B cell (primary cell): ENCODE measurements at regions of chr12 and their contacts with region 1.

Region 1: GRCh38 chr12:104108755-104109445 is 29.1 kb downstream of the NFYB start:
- DNase-seq: peak; percentile 82
- ATAC-seq: peak; percentile 91
- H3K4me3 ChIP-seq: no peak overlapping the region
- H3K4me3 Mint-ChIP-seq: no peak overlapping the region
- H3K27ac ChIP-seq: no peak overlapping the region
- H3K27ac Mint-ChIP-seq: peak overlapping the region; percentile 44
- H3K4me1 ChIP-seq: peaks cover 6 to 8% of the 10 kb centered on the region in 2 donors
- H3K4me1 Mint-ChIP-seq: peaks cover 8% of the 10 kb centered on the region
- H3K27me3 ChIP-seq: no peaks in the 10 kb centered on the region
- H3K27me3 Mint-ChIP-seq: no peaks in the 10 kb centered on the region
- CTCF ChIP-seq: peak; percentile 95

Region 2: DNA sequence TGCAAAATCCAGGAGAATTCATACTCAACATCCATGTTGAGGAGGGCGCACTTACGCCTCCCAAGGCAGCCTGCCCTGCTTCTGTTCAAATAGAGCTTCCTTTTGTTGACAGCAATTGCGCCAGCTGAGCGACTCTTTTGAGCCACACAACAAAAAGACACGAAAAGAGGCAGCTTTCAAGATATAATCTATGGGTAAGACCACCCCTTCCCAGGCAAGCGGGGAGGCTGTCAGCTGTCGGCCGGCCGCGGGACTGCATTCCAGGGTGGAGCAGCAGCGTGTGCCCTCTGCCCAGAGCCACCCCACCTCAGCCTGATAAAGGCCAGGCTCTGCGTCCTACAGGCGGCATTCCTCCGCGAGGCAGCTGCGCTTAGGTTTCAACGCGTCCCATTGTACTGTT is 537.6 kb before region 1 on chr12:
- CTCF ChIA-PET with region 1: no interaction called
- POLR2A ChIA-PET with region 1: no interaction called
- intact Hi-C with region 1: loop called (anchors 10 kb)
- DNase-seq: no peak
- ATAC-seq: no peak
- H3K4me3 ChIP-seq: no peak overlapping the region
- H3K4me3 Mint-ChIP-seq: no peak overlapping the region
- H3K27ac ChIP-seq: no peak overlapping the region
- H3K27ac Mint-ChIP-seq: no peak overlapping the region
- H3K4me1 ChIP-seq: peaks cover 3 to 9% of the 10 kb centered on the region in 2 donors
- H3K4me1 Mint-ChIP-seq: peaks cover 5% of the 10 kb centered on the region
- H3K27me3 ChIP-seq: peaks cover 0 to 42% (median 23%) of the 10 kb centered on the region in 4 experiments
- H3K27me3 Mint-ChIP-seq: peaks cover 72% of the 10 kb centered on the region
- CTCF ChIP-seq: no peak

Region 3: DNA sequence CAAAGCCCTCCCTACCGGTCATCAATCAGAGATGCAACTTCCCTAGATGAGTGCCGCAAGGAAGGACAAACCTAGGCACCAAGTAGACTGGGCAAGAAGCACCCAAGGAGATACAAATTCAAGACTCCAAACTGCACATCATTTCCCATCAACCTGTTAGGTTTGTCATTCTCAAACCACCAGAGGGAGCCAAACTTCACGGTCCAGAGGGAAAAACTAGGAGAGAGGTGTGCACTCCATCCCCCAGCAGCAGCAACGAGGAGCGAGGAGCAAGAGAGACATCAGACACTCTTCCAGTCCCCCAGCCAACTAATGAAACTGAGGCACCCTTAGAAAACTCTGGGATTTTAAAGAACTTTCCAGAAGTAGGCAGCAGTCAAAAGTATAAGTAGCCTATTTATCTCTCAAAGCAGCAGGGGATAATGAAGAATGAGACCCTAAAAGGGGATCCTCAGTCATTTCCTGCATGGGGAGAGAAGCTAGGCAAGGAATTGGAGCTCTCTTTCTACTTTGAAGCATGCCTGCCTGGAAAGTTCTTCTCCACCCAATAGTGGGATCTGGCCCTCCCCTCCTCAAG is 230.9 kb before region 1 on chr12:
- CTCF ChIA-PET with region 1: interaction called, 46 read pairs
- POLR2A ChIA-PET with region 1: no interaction called
- intact Hi-C with region 1: loop called (anchors 1 kb)
- DNase-seq: peak; percentile 74
- ATAC-seq: peak; percentile 70
- H3K4me3 ChIP-seq: no peak overlapping the region
- H3K4me3 Mint-ChIP-seq: no peak overlapping the region
- H3K27ac ChIP-seq: no peak overlapping the region
- H3K27ac Mint-ChIP-seq: no peak overlapping the region
- H3K4me1 ChIP-seq: peaks cover 15 to 20% of the 10 kb centered on the region in 2 donors
- H3K4me1 Mint-ChIP-seq: peaks cover 29% of the 10 kb centered on the region
- H3K27me3 ChIP-seq: no peaks in the 10 kb centered on the region
- H3K27me3 Mint-ChIP-seq: no peaks in the 10 kb centered on the region
- CTCF ChIP-seq: peak; percentile 81

Region 4: GRCh38 chr12:104057771-104058197 is 51.1 kb before region 1 on chr12:
- CTCF ChIA-PET with region 1: interaction called, 98 read pairs
- POLR2A ChIA-PET with region 1: no interaction called
- intact Hi-C with region 1: loop called (anchors 1 kb)
- DNase-seq: peak; percentile 47
- ATAC-seq: peak; percentile 31
- H3K4me3 ChIP-seq: no peak overlapping the region
- H3K4me3 Mint-ChIP-seq: no peak overlapping the region
- H3K27ac ChIP-seq: no peak overlapping the region
- H3K27ac Mint-ChIP-seq: no peak overlapping the region
- H3K4me1 ChIP-seq: no peaks in the 10 kb centered on the region
- H3K4me1 Mint-ChIP-seq: no peaks in the 10 kb centered on the region
- H3K27me3 ChIP-seq: peaks cover 0 to 20% (median 3%) of the 10 kb centered on the region in 4 experiments
- H3K27me3 Mint-ChIP-seq: peaks cover 40% of the 10 kb centered on the region
- CTCF ChIP-seq: peak; percentile 67

Region 5: DNA sequence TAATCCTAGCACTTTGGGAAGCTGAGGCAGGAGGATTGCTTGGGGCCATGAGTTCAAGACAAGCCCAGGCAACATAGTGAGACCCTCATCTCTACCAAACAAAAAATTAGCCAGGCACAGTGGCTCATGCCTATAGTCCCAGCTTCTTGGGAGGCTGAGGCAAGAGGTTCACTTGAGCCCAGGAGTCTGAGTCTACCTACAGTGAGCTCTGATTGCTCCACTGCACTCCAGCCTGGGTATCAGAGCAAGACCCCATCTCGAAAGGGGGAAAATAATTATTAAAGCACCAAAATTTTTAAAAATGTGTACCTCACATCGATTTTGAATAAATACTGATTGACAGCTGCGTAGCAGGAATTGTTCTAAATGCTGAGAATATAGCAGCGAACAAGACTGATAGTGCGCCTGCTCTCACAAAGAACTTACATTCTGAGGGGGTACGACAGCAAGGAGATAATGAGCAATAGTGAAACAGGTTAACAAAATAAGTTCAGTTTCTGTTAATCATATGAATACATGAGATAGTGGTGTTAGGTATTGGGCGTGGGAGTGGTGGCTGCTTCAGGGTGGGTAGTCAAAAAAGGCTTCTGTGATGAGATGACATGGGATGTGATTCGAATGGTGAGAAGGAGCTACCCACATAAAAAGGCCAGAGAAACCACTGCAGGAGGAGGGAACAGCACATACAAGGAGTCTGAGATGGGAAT is 25.0 kb before region 1 on chr12:
- CTCF ChIA-PET with region 1: interaction called, 11 read pairs
- POLR2A ChIA-PET with region 1: no interaction called
- intact Hi-C with region 1: no loop called
- DNase-seq: no peak
- ATAC-seq: no peak
- H3K4me3 ChIP-seq: no peak overlapping the region
- H3K4me3 Mint-ChIP-seq: no peak overlapping the region
- H3K27ac ChIP-seq: no peak overlapping the region
- H3K27ac Mint-ChIP-seq: no peak overlapping the region
- H3K4me1 ChIP-seq: no peaks in the 10 kb centered on the region
- H3K4me1 Mint-ChIP-seq: no peaks in the 10 kb centered on the region
- H3K27me3 ChIP-seq: no peaks in the 10 kb centered on the region
- H3K27me3 Mint-ChIP-seq: no peaks in the 10 kb centered on the region
- CTCF ChIP-seq: no peak

Region 6: GRCh38 chr12:104121001-104121400 is 12.1 kb after region 1 on chr12:
- CTCF ChIA-PET with region 1: interaction called, 14 read pairs
- POLR2A ChIA-PET with region 1: no interaction called
- intact Hi-C with region 1: no loop called
- DNase-seq: no peak
- ATAC-seq: no peak
- H3K4me3 ChIP-seq: no peak overlapping the region
- H3K4me3 Mint-ChIP-seq: no peak overlapping the region
- H3K27ac ChIP-seq: no peak overlapping the region
- H3K27ac Mint-ChIP-seq: no peak overlapping the region
- H3K4me1 ChIP-seq: no peaks in the 10 kb centered on the region
- H3K4me1 Mint-ChIP-seq: no peaks in the 10 kb centered on the region
- H3K27me3 ChIP-seq: no peaks in the 10 kb centered on the region
- H3K27me3 Mint-ChIP-seq: no peaks in the 10 kb centered on the region
- CTCF ChIP-seq: no peak